Heart right ventricle (tissue), 16 donors: ENCODE measurements at regions of chr5 and their contacts with region 1.

Region 1: GRCh38 chr5:102807878-102808502 is 52.9 kb downstream of the PAM start:
- DNase-seq: no peak
- ATAC-seq: peak in 3 of 8 donors; percentile 28 to 59 (median 34)
- H3K4me3 ChIP-seq: no peak overlapping the region
- H3K27ac ChIP-seq: no peak overlapping the region
- H3K4me1 ChIP-seq: peaks cover 0 to 47% (median 21%) of the 10 kb centered on the region in 9 donors
- H3K27me3 ChIP-seq: no peaks in the 10 kb centered on the region
- CTCF ChIP-seq: no peak

Region 2: GRCh38 chr5:102771435-102771834 is 36.6 kb before region 1 on chr5:
- intact Hi-C with region 1: loop called in 1 of 10 experiments (anchors 1 kb)
- DNase-seq: no peak
- ATAC-seq: peak in 4 of 8 donors; percentile 52 to 79 (median 72)
- H3K4me3 ChIP-seq: no peak overlapping the region
- H3K27ac ChIP-seq: peak overlapping the region in 6 of 10 donors; percentile 2 to 74 (median 65)
- H3K4me1 ChIP-seq: peaks cover 0 to 51% (median 33%) of the 10 kb centered on the region in 9 donors
- H3K27me3 ChIP-seq: no peaks in the 10 kb centered on the region
- CTCF ChIP-seq: no peak

Region 3: DNA sequence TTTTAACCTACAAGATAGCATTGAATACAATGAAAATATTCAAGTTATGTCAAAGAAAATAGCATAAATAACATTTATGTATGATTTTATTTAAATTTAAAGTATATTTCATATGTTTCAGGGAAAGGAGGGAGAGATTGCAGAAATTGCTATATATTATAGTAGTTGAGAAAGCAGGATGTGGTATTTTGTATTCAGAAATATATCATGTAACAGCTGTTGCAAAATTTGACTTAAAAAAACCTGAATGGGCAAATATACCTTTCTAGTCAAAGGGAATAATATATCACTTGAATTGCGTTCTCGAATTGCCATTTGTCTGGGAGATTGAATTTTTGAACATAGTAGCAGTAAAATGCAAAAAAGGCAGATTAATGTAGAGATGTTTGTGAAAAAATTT is 27.7 kb after region 1 on chr5:
- intact Hi-C with region 1: loop called in 1 of 10 experiments (anchors 2 kb)
- DNase-seq: no peak
- ATAC-seq: no peak
- H3K4me3 ChIP-seq: no peak overlapping the region
- H3K27ac ChIP-seq: no peak overlapping the region
- H3K4me1 ChIP-seq: peaks cover 0 to 36% (median 18%) of the 10 kb centered on the region in 9 donors
- H3K27me3 ChIP-seq: no peaks in the 10 kb centered on the region
- CTCF ChIP-seq: no peak

Region 4: GRCh38 chr5:102865510-102866236 is 57.7 kb after region 1 on chr5:
- intact Hi-C with region 1: loop called in 1 of 10 experiments (anchors 10 kb)
- DNase-seq: peak; percentile 78 to 83
- ATAC-seq: peak; percentile 89 to 98 (median 94)
- H3K4me3 ChIP-seq: peak overlapping the region; percentile 56 to 83 (median 72)
- H3K27ac ChIP-seq: peak overlapping the region; percentile 78 to 95 (median 91)
- H3K4me1 ChIP-seq: peaks cover 0 to 62% (median 25%) of the 10 kb centered on the region in 9 donors
- H3K27me3 ChIP-seq: no peaks in the 10 kb centered on the region
- CTCF ChIP-seq: peak in 1 of 9 donors; percentile 10